ENCODE measurements at regions of chr11 and their contacts with region 1.

Region 1: GRCh38 chr11:46977038-46977813 is 40.7 kb downstream of the CSTPP1 start:
- DNase-seq: no peak
- H3K4me3 Mint-ChIP-seq: no peak overlapping the region
- H3K27ac Mint-ChIP-seq: no peak overlapping the region
- H3K4me1 Mint-ChIP-seq: peaks cover 12% of the 10 kb centered on the region
- H3K27me3 Mint-ChIP-seq: no peaks in the 10 kb centered on the region
- CTCF ChIP-seq: no peak

Region 2: DNA sequence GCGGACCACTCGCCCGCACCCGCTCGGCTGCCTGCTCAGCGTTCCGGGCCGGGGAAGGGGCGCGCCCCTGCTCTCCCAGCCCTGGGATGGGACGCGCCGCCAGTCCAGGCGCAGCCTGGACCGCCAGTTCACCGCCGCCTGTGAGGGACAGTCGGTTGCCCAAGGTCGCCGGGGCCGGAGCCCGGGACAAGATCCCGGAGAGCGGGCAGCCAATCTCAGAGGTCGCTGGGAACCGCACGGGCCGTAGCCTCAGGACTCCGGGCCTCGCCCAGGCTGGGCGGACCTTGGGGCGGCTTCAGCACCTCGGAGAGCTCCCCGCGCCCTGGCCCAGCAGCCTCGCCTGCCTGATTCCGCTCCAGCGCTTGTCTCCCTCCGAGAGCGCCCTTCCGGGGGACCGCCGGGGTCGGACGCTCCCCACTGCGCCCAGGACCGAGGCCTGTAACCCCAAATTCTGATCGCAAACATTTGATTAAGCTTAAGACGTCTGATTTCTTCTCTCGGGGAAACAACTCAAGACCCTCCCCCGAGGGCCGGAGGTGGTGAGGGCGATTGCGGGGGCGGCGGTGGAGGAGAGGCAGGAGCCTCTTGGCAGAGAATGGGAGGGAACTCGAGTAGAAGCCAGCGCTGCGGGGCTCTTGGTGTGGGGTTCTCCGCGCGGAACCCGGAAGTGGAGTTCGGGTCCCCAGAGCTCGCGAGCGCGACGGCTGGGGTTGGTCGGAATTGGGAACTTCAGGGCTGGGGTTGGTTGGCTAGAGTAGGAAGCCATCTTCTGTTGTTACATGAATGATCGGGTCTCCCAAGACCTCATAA is 584.6 kb before region 1 on chr11:
- CTCF ChIA-PET with region 1: no interaction called
- intact Hi-C with region 1: no loop called
- DNase-seq: peak; percentile 89
- H3K4me3 Mint-ChIP-seq: peak overlapping the region; percentile 71
- H3K27ac Mint-ChIP-seq: peak overlapping the region; percentile 50
- H3K4me1 Mint-ChIP-seq: peaks cover 26% of the 10 kb centered on the region
- H3K27me3 Mint-ChIP-seq: peaks cover 54% of the 10 kb centered on the region
- CTCF ChIP-seq: no peak

Region 3: DNA sequence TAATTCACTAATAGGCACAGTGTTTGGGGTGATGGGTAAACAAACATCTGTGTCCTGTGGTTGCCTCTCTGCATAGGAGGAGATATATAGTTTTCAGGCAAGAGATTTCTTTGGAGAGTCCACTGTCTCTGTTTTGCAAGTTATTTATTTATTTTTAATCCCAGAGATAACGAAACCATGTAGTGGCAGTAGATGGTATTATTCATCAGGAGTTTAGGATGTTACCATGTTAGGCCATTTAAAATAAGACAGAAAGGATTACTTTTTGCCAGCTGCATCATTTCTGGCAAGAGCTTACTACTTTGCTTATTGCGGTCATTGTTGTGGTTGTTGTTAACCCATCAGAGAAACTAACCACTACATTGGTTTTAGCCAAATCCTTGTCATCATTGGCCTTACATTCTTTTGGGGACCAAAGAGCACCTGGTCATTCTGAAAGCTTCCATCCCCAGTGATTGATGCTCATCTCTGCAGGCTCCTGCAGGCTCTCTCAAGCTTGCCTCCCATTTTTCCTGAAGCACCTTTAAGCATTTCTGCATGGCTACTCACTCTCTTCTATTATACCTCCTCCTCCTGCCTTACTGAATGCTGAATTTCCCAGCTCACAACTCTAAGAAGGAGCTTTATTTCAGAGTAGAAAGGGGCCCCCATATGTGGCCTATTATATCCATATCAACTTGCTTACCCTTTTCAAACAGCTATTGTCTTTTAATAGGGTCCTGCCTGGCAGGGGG is 43.7 kb after region 1 on chr11:
- CTCF ChIA-PET with region 1: no interaction called
- intact Hi-C with region 1: loop called (anchors 1 kb)
- DNase-seq: no peak
- H3K4me3 Mint-ChIP-seq: no peak overlapping the region
- H3K27ac Mint-ChIP-seq: no peak overlapping the region
- H3K4me1 Mint-ChIP-seq: no peaks in the 10 kb centered on the region
- H3K27me3 Mint-ChIP-seq: no peaks in the 10 kb centered on the region
- CTCF ChIP-seq: no peak

Measured in Calu3 (cell line).